ENCODE measurements at regions of chr3 and their contacts with region 1.

Region 1: GRCh38 chr3:183481582-183481981 is 53.2 kb upstream of the MCF2L2 start:
- DNase-seq: peak; percentile 50
- ATAC-seq: peak; percentile 81
- H3K4me3 Mint-ChIP-seq: no peak overlapping the region
- H3K27ac Mint-ChIP-seq: peak overlapping the region; percentile 34
- H3K4me1 Mint-ChIP-seq: peaks cover 14% of the 10 kb centered on the region
- H3K27me3 Mint-ChIP-seq: no peaks in the 10 kb centered on the region

Region 2: GRCh38 chr3:182746959-182747358 is 734.6 kb before region 1 on chr3:
- CTCF ChIA-PET with region 1: no interaction called
- POLR2A ChIA-PET with region 1: no interaction called
- intact Hi-C with region 1: no loop called
- DNase-seq: no peak
- ATAC-seq: no peak
- H3K4me3 Mint-ChIP-seq: no peak overlapping the region
- H3K27ac Mint-ChIP-seq: no peak overlapping the region
- H3K4me1 Mint-ChIP-seq: no peaks in the 10 kb centered on the region
- H3K27me3 Mint-ChIP-seq: peaks cover 4% of the 10 kb centered on the region

Region 3: DNA sequence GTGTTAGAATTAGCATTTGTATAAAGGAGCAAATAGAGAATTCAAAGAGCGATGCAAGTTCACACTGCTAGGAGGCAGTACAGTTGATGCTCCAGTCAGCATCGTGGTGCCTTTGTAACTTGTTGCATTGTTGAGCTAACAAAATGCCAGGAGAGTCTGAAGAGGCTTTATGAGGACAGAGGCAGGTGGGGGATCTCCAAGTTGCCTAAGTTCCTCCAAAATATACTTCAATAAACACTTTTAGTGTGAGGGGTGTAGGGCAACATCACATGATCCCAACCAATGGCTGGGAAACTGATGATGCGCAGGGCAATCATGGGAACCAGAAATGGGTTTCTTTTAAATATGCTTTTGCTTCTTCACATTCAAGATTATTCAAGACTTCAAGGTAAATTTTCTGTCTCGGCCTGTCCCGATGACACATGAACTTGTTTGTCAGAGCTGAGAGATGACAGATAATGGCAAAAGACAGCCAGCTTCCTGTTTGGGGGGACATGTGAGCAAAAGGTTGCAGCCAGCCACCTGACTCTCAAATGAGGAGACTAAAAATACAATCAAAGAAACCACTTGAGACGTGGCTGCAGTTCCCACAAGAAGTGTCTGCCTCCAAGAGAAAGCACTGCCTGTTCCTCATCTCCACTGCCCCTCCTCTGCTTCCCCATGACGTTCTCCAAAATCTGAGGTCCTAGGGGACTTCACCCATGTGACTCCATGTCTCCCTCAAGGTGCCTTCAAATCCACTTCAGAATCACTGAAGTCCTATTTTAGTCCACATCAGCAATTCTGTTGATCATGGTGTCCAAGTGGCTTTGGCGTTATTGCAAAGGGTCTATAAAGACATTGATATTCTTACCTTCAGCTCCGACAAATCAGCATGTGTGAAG is 34.6 kb after region 1 on chr3:
- CTCF ChIA-PET with region 1: no interaction called
- POLR2A ChIA-PET with region 1: no interaction called
- intact Hi-C with region 1: loop called in 1 of 2 experiments (anchors 5 kb)
- DNase-seq: peak; percentile 72
- ATAC-seq: peak; percentile 81
- H3K4me3 Mint-ChIP-seq: no peak overlapping the region
- H3K27ac Mint-ChIP-seq: peak overlapping the region; percentile 81
- H3K4me1 Mint-ChIP-seq: peaks cover 83% of the 10 kb centered on the region
- H3K27me3 Mint-ChIP-seq: no peaks in the 10 kb centered on the region